CD4-positive, alpha-beta memory T cell (primary cell): ENCODE measurements at regions of chr17 and their contacts with region 1.

Region 1: DNA sequence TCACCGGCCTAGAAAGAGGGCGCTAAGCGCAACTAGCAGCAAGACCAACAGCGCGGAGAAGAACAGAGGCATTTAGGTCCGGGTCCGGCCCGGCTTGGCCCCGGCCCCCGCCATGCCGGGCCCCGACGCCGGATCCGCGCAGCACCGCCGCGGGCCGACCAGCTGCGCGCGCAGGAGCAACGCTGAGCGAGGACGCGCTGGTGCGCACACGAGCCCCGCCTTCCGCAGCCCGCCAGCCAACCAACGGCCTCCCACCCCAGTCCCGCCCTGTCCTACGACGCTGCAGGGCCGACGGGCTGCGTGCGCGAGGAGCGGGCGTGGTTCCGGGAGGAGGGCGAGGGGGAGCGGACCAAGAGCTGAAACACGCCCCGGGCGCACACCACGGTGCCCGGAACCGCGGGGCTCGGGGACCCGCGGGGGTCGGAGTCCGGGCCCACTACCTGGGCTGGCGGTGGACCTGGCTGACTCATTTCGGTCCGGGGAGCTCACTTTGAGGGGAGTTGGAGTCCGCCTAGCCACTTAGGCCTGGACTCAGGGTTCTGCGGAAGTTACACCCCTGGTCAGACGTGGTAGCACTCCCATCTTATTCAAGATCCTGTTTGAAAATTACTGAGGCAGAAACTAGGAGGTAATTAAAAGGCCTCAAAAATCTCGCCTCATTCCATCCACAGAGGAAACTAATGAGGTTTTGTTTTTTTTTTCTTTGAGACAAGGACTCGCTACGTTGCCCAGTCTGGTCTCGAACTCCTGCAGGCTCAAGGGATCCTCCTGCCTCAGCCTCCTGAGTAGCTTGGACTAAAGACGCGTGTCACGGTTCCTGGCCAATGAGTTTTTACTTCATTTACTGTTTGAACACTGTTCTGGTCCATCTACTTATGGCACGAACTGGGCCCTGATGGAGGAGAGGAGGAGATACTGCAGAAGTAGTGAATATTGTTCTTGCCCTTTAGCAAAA is at the start of gene BLTP2:
- DNase-seq: peak; percentile 93 to 95 (median 94)
- H3K4me3 ChIP-seq: peak within 1 kb of the TSS; percentile 45 to 98
- H3K4me3 Mint-ChIP-seq: peak within 1 kb of the TSS; percentile 86 to 96 (median 92)
- H3K27ac ChIP-seq: peak within 1 kb of the TSS; percentile 91
- H3K27ac Mint-ChIP-seq: peak within 1 kb of the TSS; percentile 93 to 99 (median 98)
- H3K4me1 ChIP-seq: peaks cover 47% of the 10 kb centered on the region
- H3K4me1 Mint-ChIP-seq: peaks cover 31 to 45% (median 37%) of the 10 kb centered on the region in 4 donors
- H3K27me3 ChIP-seq: no peaks in the 10 kb centered on the region
- H3K27me3 Mint-ChIP-seq: no peaks in the 10 kb centered on the region
- total RNA-seq, gene BLTP2: 132 to 149 TPM

Region 2: GRCh38 chr17:28571255-28572122 is 73.8 kb before region 1 on chr17 and contains the start of gene PIGS:
- CTCF ChIA-PET with region 1: no interaction called
- POLR2A ChIA-PET with region 1: interaction called, 20 read pairs
- intact Hi-C with region 1: no loop called
- DNase-seq: peak; percentile 84 to 93 (median 87)
- H3K4me3 ChIP-seq: peak within 1 kb of the TSS; percentile 59 to 93
- H3K4me3 Mint-ChIP-seq: peak within 1 kb of the TSS; percentile 96 to 99 (median 97)
- H3K27ac ChIP-seq: peak within 1 kb of the TSS; percentile 79
- H3K27ac Mint-ChIP-seq: peak within 1 kb of the TSS; percentile 80 to 98 (median 97)
- H3K4me1 ChIP-seq: peaks cover 68% of the 10 kb centered on the region
- H3K4me1 Mint-ChIP-seq: peaks cover 41 to 82% (median 57%) of the 10 kb centered on the region in 4 donors
- H3K27me3 ChIP-seq: no peaks in the 10 kb centered on the region
- H3K27me3 Mint-ChIP-seq: no peaks in the 10 kb centered on the region
- total RNA-seq, gene PIGS: 57.9 to 58.2 TPM

Region 3: DNA sequence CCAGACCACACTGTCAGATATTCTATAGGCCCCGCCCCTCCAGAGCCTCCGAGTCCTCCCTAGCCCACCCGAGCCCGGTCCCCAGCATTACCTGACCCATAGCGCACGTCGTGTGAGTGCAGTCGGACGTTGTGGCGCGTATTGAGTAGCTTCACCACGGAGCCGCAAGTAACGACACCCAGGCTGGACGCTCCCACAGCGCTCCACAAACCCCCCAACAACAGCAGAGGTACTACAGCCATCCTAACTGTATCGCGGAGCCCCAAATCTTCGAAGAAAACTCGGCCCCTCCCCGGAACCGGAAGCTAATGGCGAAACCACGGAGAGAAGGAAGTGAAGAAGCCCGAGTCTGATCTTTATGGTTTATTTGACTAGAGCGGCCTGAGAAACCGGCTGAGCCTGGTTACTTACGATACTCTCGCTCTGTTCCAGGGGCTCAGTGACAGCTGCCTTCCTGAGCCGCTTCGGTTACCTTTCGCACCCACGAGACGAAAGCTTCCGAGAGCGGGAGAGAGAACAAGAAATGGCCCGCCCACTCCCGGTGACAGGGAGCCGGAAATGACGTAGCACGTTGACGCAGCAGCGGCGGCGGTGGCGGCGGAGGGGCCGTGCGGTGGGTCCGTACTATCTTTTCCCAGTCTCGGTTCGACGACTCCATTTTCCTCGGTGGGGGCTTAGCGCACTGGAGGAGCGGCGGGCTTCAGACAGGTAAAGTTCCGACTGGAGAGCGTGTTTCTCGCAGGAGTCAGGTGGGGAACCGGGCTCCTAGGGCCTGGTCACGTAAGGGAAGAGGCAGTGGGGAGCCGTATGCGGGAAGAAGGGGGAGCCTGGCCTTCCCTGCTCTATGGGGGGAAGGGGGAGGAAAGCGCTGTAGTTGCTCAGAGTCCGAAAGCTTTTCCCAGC is 16.6 kb after region 1 on chr17 and contains the starts of genes SDF2 and SUPT6H:
- CTCF ChIA-PET with region 1: interaction called, 51 read pairs
- POLR2A ChIA-PET with region 1: interaction called, 77 read pairs
- intact Hi-C with region 1: loop called (anchors 1 kb)
- DNase-seq: peak; percentile 94 to 96 (median 95)
- H3K4me3 ChIP-seq: peak within 1 kb of the TSS; percentile 92 to 99
- H3K4me3 Mint-ChIP-seq: peak within 1 kb of the TSS; percentile 99 to 100 (median 100)
- H3K27ac ChIP-seq: peak within 1 kb of the TSS; percentile 99
- H3K27ac Mint-ChIP-seq: peak within 1 kb of the TSS; percentile 97 to 100 (median 100)
- H3K4me1 ChIP-seq: peaks cover 51% of the 10 kb centered on the region
- H3K4me1 Mint-ChIP-seq: peaks cover 42 to 68% (median 56%) of the 10 kb centered on the region in 4 donors
- H3K27me3 ChIP-seq: no peaks in the 10 kb centered on the region
- H3K27me3 Mint-ChIP-seq: no peaks in the 10 kb centered on the region
- total RNA-seq, gene SDF2: 41.5 to 48.1 TPM
- total RNA-seq, gene SUPT6H: 96.5 to 102 TPM

Region 4: DNA sequence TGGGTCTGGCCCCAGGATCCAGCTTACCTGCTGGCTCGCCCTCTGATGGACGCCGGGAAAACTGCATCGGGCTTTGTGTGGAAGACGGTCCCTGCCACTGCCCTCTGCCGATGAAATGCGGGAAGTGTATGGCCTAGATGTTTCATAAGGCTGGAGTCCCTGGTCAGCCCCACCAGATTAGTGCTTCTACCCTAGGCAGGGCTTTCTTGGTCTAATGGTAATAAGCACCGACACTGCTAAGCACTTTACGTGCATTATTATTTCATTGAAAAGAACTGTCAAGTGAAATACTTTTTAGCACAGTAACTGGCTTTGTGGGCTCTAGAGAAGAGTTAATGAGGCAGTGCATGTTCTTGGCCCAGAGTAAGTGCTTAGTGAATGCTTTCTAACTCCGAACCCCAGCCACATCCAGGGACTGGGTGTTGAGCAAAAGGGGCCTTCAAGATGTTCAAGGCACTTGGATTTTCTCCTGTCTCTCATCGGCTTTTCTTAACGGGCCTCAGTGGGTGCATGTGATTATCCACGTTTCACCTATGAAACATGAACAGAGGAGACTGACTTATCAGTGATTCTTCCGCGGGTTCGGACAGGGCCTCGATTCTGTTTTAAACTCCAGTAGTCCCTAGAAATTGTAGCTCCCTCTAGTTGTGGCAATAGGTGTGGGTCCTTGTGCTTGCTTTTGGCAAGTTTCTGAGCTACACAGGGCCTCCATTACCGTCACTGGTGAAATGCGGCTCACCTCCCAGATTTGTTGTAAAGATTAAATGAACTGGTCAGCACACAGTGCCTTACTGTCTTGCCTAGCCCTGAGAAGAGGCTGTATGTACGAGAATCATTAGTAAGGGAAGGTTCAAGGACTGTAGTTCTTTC is 105.2 kb after region 1 on chr17:
- CTCF ChIA-PET with region 1: interaction called, 4 read pairs
- POLR2A ChIA-PET with region 1: interaction called, 3 read pairs
- intact Hi-C with region 1: loop called (anchors 1 kb)
- DNase-seq: peak; percentile 82 to 89 (median 85)
- H3K4me3 ChIP-seq: no peak overlapping the region
- H3K4me3 Mint-ChIP-seq: peak overlapping the region in 1 of 8 donors; percentile 49
- H3K27ac ChIP-seq: peak overlapping the region; percentile 10
- H3K27ac Mint-ChIP-seq: peak overlapping the region in 6 of 7 donors; percentile 17 to 85 (median 70)
- H3K4me1 ChIP-seq: peaks cover 13% of the 10 kb centered on the region
- H3K4me1 Mint-ChIP-seq: peaks cover 7 to 18% (median 11%) of the 10 kb centered on the region in 4 donors
- H3K27me3 ChIP-seq: no peaks in the 10 kb centered on the region
- H3K27me3 Mint-ChIP-seq: no peaks in the 10 kb centered on the region

Region 5: GRCh38 chr17:28828294-28829040 is 183.2 kb after region 1 on chr17:
- CTCF ChIA-PET with region 1: no interaction called
- POLR2A ChIA-PET with region 1: no interaction called
- intact Hi-C with region 1: no loop called
- DNase-seq: no peak
- H3K4me3 ChIP-seq: no peak overlapping the region
- H3K4me3 Mint-ChIP-seq: no peak overlapping the region
- H3K27ac ChIP-seq: no peak overlapping the region
- H3K27ac Mint-ChIP-seq: peak overlapping the region in 1 of 7 donors; percentile 3
- H3K4me1 ChIP-seq: no peaks in the 10 kb centered on the region
- H3K4me1 Mint-ChIP-seq: peaks cover 14 to 21% (median 15%) of the 10 kb centered on the region in 4 donors
- H3K27me3 ChIP-seq: no peaks in the 10 kb centered on the region
- H3K27me3 Mint-ChIP-seq: no peaks in the 10 kb centered on the region

Region 6: GRCh38 chr17:28854457-28855350 is 209.4 kb after region 1 on chr17 and contains the start of gene ERAL1:
- CTCF ChIA-PET with region 1: no interaction called
- POLR2A ChIA-PET with region 1: no interaction called
- intact Hi-C with region 1: no loop called
- DNase-seq: peak; percentile 82 to 90 (median 85)
- H3K4me3 ChIP-seq: peak within 1 kb of the TSS; percentile 88 to 91
- H3K4me3 Mint-ChIP-seq: peak within 1 kb of the TSS; percentile 90 to 98 (median 95)
- H3K27ac ChIP-seq: peak within 1 kb of the TSS; percentile 73
- H3K27ac Mint-ChIP-seq: peak within 1 kb of the TSS; percentile 82 to 96 (median 94)
- H3K4me1 ChIP-seq: peaks cover 13% of the 10 kb centered on the region
- H3K4me1 Mint-ChIP-seq: peaks cover 4 to 19% (median 11%) of the 10 kb centered on the region in 4 donors
- H3K27me3 ChIP-seq: no peaks in the 10 kb centered on the region
- H3K27me3 Mint-ChIP-seq: no peaks in the 10 kb centered on the region
- total RNA-seq, gene ERAL1: 23.5 to 24.3 TPM